HEK293T (cell line): ENCODE measurements at regions of chr5 and their contacts with region 1.

Region 1: DNA sequence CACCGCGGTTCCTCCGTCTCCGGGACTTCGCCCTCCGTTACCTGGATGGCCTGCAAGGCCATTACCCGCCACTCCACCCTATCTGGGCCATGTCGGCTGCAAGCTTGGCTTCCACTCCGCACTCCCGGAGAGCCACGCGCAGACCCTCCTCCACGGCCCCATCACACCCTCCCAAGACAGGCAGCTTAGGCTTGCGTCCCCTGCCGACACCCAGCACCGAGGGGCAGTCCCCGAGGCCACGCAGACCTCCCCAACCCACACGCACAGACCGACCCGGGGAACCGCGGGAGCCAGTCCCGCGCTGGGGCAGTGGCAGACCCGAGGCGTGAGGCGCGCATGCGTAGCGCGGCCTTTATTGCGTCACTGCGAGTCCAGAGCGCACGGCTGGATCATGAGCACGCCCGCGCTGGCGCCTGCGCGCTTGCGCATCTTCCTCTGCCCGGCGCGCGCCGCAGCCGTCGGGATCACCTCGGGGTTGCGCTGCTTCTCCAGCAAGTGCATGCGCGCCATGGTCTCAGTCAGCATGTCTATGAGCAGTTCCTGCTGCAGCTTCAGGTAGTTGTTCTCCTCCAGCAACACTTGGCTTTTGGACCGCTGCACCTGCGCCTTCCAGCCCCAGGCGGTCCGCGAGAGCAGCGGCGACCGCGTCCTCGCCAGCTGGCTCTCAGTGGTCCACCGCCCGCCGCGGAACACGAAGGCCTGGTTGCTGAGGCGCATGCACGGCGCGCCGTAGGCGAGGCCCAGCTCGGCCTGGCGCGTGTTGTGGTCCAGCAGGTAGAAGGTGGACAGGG is 2.4 kb downstream of the CBY3 start:
- DNase-seq: peak; percentile 99

Region 2: GRCh38 chr5:179668391-179668790 is 10.0 kb before region 1 on chr5:
- CTCF ChIA-PET with region 1: interaction called, 11 read pairs
- POLR2A ChIA-PET with region 1: interaction called, 15 read pairs
- DNase-seq: peak; percentile 85

Region 3: DNA sequence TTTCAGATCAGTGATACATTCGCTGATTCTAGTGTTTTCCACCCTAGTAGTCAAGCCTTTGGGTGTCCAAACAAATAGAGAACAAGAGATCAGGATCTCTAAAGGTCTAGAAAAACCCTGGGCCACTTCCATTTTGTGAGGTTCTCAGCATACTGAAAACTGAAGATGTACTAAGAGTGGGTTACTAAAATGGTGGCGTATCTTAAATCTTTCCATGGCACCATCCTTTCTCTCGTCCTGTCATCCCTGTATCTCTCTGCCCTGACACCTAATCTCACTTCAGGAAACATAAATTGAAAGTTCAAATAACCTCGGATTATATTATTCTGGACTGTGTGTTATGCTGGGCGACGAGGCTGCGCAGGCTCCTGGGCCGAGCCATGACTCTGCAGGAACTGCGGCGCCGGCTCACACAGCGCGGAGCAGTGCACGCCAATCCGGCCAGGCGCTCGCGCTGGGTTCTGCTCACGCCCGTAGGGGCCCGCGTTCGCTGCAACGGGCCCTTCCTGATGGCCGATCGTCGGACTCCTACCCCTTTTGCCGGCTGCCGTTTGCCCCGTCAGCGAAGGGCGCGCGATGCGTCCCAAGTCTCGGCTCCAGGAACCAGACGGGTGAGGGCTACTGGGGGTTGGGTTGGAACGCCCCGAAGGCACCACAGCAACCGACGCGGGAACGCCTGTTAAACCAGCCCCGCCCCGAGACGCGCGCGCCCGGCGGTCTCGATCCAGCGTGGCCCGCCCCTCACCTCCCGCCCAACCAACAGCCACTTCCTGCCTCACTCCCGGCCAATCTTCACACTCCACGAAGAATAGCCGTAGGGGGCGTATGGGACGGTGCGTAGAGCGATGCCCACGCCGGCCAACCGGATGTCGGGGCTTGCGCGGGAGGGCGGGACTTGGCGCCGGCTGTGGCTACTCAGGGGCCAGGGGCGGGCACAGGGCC is 19.8 kb after region 1 on chr5:
- CTCF ChIA-PET with region 1: no interaction called
- POLR2A ChIA-PET with region 1: interaction called, 11 read pairs
- DNase-seq: peak; percentile 99